ENCODE measurements at regions of chr16 and their contacts with region 1.

Region 1: DNA sequence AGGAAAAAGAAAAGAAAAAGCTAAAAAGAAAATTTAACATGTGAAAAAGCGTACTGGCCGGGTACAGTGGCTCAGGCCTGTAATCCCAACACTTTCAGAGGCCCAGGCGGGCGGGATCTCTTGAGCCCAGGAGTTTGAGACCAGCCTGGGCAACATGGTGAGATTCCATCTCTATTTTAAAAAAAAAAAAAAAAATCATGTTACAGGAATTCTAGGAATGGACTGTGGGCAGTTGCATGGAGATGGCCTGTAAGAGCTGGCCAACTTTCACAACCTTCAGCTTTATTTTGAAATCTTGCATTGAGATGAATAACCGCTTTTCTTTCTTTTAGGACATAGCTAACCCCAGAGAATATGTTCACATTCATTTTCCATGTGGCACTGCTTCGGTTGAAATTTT is 8.2 kb upstream of the CIAO3 start:
- DNase-seq: no peak
- ATAC-seq: peak in 1 of 2 experiments; percentile 35; a peak in 2 of 6 replicates
- H3K4me3 ChIP-seq: no peak overlapping the region
- H3K27ac ChIP-seq: no peak overlapping the region
- H3K4me1 ChIP-seq: no peaks in the 10 kb centered on the region
- CTCF ChIP-seq: no peak
- EP300 ChIP-seq: no peak
- POLR2A ChIP-seq: no peak
- RAD21 ChIP-seq: no peak

Region 2: GRCh38 chr16:456891-457483 is 292.0 kb before region 1 on chr16:
- CTCF ChIA-PET with region 1: no interaction called
- POLR2A ChIA-PET with region 1: no interaction called
- DNase-seq: no peak
- ATAC-seq: peak in 1 of 2 experiments; percentile 66; a peak in 4 of 6 replicates
- H3K4me3 ChIP-seq: no peak overlapping the region
- H3K27ac ChIP-seq: peak overlapping the region; percentile 29 to 60; a peak in 1 of 6 replicates
- H3K4me1 ChIP-seq: peaks cover 30% of the 10 kb centered on the region
- CTCF ChIP-seq: no peak
- EP300 ChIP-seq: no peak
- POLR2A ChIP-seq: no peak
- RAD21 ChIP-seq: no peak

Region 3: GRCh38 chr16:760545-761343 is 11.7 kb after region 1 on chr16 and contains the start of gene MSLN:
- CTCF ChIA-PET with region 1: interaction called, 16 read pairs
- POLR2A ChIA-PET with region 1: interaction called, 3 read pairs
- DNase-seq: peak in 1 of 2 experiments; percentile 71
- ATAC-seq: peak; percentile 22 to 62; a peak in 3 of 6 replicates
- H3K4me3 ChIP-seq: no peak within 1 kb of the TSS
- H3K27ac ChIP-seq: peak within 1 kb of the TSS; percentile 66 to 79; a peak in 5 of 6 replicates
- H3K4me1 ChIP-seq: peaks cover 35% of the 10 kb centered on the region
- CTCF ChIP-seq: no peak
- EP300 ChIP-seq: no peak
- POLR2A ChIP-seq: no peak
- RAD21 ChIP-seq: no peak
- polyA plus RNA-seq, gene MSLN: 1.8 and 2.4 TPM in 2 replicates